Breast epithelium (tissue), 4 donors: ENCODE measurements at regions of chr16 and their contacts with region 1.

Region 1: GRCh38 chr16:78503602-78504001 is 404.1 kb downstream of the WWOX start:
- DNase-seq: no peak
- H3K4me3 ChIP-seq: no peak overlapping the region
- H3K27ac ChIP-seq: no peak overlapping the region
- H3K4me1 ChIP-seq: peaks cover 0 to 11% of the 10 kb centered on the region in 2 donors
- H3K27me3 ChIP-seq: no peaks in the 10 kb centered on the region
- CTCF ChIP-seq: peak; percentile 79 to 93 (median 89)
- POLR2A ChIP-seq: no peak

Region 2: DNA sequence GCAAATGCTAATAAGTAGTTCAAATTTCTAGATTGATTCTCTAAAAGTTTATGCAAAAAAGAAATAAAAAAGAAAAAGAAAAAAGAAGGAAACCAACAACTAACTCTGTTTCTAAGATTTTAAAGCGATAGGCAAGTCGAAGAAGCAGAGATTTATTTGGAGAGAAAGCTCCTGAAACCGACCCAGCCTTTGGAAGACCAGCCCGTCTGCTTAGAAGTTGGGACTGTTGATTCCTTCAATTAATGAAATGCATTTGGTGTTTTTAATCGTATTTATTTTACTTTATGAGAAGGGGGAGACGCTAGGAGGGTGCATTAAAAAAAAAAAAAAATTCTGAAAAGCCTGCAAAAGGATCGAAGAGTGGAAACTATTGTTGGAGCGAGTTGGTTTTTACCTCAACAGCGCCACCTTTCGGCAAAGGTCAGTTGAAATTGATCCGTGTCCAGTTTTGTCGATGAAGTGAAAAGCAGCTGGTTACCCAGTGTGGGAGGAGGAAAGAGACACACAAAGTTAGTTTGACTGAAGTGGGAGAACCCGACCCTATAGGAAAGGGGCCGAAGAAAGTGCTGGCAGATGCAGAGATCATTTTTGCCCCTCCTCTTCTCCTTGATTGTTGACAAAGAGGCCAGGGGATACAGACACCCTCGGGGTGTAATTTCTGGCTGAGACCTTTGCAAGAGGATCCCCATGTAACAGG is 1098.5 kb after region 1 on chr16:
- intact Hi-C with region 1: loop called (anchors 10 kb)
- DNase-seq: peak; percentile 76 to 82
- H3K4me3 ChIP-seq: peak overlapping the region; percentile 68 to 89 (median 79)
- H3K27ac ChIP-seq: peak overlapping the region; percentile 95 to 98
- H3K4me1 ChIP-seq: peaks cover 0 to 9% of the 10 kb centered on the region in 2 donors
- H3K27me3 ChIP-seq: no peaks in the 10 kb centered on the region
- CTCF ChIP-seq: peak; percentile 72 to 95 (median 81)
- POLR2A ChIP-seq: no peak